ENCODE measurements at regions of chr9 and their contacts with region 1.

Region 1: GRCh38 chr9:114108016-114108833 is 9.1 kb upstream of the KIF12 start:
- DNase-seq: no peak
- H3K4me3 ChIP-seq: no peak overlapping the region
- H3K27ac ChIP-seq: no peak overlapping the region
- H3K4me1 ChIP-seq: peaks cover 0 to 20% (median 3%) of the 10 kb centered on the region in 3 donors
- H3K27me3 ChIP-seq: peaks cover 0 to 9% (median 0%) of the 10 kb centered on the region in 4 donors
- CTCF ChIP-seq: peak; percentile 63 to 92 (median 91)
- POLR2A ChIP-seq: no peak

Region 2: DNA sequence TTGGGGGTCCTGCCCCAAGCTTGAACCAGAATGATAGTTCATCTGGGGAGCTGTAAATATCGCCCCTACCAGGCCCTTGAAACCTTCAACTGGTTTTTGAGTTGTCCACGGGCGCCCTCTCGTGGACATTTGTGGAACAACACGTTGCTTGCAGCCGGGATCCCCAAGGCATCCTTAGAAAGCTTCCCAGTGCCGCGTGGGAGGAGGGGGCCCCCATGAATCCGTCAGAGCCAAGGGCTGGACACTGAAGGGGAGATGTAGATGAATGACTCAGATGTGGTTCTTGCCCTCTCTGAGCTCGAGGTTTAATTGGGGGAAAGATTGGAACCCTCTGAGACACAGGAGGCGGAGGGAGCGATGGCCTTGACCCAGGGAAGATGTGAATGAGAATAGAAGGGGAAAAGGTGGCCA is 182.8 kb after region 1 on chr9:
- intact Hi-C with region 1: loop called (anchors 5 kb)
- DNase-seq: peak; percentile 11
- H3K4me3 ChIP-seq: no peak overlapping the region
- H3K27ac ChIP-seq: no peak overlapping the region
- H3K4me1 ChIP-seq: peaks cover 0 to 16% (median 4%) of the 10 kb centered on the region in 3 donors
- H3K27me3 ChIP-seq: no peaks in the 10 kb centered on the region
- CTCF ChIP-seq: peak; percentile 61 to 96 (median 93)
- POLR2A ChIP-seq: no peak

Measured in esophagus squamous epithelium (tissue), 5 donors.